ENCODE measurements at regions of chr11 and their contacts with region 1.

Region 1: DNA sequence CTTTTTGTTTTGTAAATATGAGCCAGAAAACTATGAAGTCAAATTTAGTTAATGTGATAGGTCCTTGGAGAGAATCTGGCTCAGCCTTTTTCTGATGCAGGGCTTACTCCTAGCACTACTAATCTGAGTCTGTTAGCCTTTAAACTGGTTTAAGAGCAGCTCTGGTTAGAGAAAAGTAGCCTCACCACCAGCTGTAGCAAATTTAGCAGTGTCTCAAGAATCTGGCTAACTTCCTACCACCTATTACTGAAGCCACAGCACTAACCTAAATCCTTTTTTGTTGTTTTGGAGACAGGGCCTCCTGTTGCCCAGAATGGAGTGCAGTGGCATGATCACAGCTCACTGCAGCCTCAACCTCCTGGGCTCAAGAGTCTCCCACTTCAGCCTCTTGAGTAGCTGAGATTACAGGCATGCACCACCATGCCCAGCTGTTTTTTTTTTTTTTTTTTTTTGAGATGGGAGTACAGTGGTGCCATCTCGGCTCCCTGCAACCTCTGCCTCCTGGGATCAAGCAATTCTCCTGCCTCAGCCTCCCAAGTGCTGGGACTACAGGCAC is 13.9 kb downstream of the RBM4B start:
- DNase-seq: no peak
- H3K4me3 ChIP-seq: no peak overlapping the region
- H3K27ac ChIP-seq: no peak overlapping the region
- H3K4me1 ChIP-seq: no peaks in the 10 kb centered on the region
- H3K27me3 ChIP-seq: no peaks in the 10 kb centered on the region
- CTCF ChIP-seq: no peak

Region 2: DNA sequence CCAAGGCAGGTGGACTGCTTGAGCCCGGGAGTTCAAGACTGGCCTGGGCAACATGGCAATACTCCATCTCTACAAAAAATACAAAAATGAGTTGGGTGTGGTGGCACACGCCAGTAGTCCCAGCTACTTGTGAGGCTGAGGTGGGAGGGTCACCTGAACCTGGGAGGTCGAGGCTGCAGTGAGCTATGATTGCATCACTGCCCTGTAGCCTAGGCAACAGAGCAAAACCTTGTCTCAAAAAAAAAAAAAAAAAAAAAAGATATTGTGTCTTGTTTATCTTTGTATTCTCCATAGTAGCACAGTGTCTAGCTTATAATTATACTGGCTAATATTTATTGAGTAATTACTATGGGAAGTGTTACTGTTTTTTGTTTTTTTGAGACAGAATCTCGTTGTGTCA is 1712.3 kb before region 1 on chr11:
- CTCF ChIA-PET with region 1: no interaction called
- POLR2A ChIA-PET with region 1: interaction called, 12 read pairs
- intact Hi-C with region 1: no loop called
- DNase-seq: no peak
- H3K4me3 ChIP-seq: no peak overlapping the region
- H3K27ac ChIP-seq: no peak overlapping the region
- H3K4me1 ChIP-seq: no peaks in the 10 kb centered on the region
- H3K27me3 ChIP-seq: peaks cover 20% of the 10 kb centered on the region
- CTCF ChIP-seq: no peak

Region 3: GRCh38 chr11:66701432-66702240 is 37.8 kb after region 1 on chr11:
- CTCF ChIA-PET with region 1: no interaction called
- POLR2A ChIA-PET with region 1: no interaction called
- intact Hi-C with region 1: no loop called
- DNase-seq: no peak
- H3K4me3 ChIP-seq: no peak overlapping the region
- H3K27ac ChIP-seq: no peak overlapping the region
- H3K4me1 ChIP-seq: no peaks in the 10 kb centered on the region
- H3K27me3 ChIP-seq: no peaks in the 10 kb centered on the region
- CTCF ChIP-seq: no peak

Region 4: DNA sequence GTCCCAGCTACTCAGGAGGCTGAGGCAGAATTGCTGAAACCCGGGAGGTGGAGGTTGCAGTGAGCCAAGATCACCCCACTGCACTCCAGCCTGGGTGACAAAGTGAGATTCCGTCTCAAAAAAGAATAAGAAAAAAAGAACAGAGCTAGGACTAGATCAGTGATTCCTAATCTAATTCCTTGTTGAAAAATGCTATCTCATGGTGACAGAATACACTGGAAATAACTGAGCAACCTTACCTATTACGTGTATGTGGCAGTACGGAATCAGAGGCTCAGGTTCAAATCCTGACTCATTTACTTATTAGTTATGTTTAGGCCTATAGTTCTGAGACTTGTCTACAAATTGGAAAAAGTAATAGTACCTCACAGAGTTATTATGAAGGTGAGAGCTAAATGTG is 159.9 kb after region 1 on chr11:
- CTCF ChIA-PET with region 1: no interaction called
- POLR2A ChIA-PET with region 1: interaction called, 22 read pairs
- intact Hi-C with region 1: no loop called
- DNase-seq: no peak
- H3K4me3 ChIP-seq: no peak overlapping the region
- H3K27ac ChIP-seq: no peak overlapping the region
- H3K4me1 ChIP-seq: no peaks in the 10 kb centered on the region
- H3K27me3 ChIP-seq: no peaks in the 10 kb centered on the region
- CTCF ChIP-seq: no peak

Measured in A673 (cell line).